Heart left ventricle (tissue), 16 donors: ENCODE measurements at regions of chr13 and their contacts with region 1.

Region 1: DNA sequence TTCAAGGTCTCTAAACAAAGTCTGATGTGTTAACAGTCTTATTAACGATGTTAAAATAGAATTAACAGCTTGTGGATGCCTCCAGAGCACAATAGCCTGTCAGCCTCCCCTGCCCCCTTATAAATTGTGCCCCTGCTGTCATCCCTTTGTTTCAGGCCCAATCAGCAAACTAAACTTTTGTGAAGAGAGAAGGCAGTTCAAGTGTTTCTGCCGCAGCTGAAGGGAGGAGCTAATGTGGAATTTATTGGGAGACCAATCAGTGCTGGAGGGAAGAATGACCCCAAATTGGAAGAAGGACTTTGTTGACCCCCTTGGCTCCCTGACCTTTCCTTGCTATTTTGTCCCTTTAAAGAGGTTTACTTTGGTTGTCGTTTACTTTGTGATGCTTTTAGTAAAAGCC is 160.5 kb downstream of the TM9SF2 start:
- DNase-seq: no peak
- ATAC-seq: no peak
- H3K4me3 ChIP-seq: no peak overlapping the region
- H3K27ac ChIP-seq: no peak overlapping the region
- H3K4me1 ChIP-seq: peaks cover 0 to 23% (median 8%) of the 10 kb centered on the region in 12 donors
- H3K27me3 ChIP-seq: peaks cover 0 to 10% (median 0%) of the 10 kb centered on the region in 9 donors
- CTCF ChIP-seq: no peak
- POLR2A ChIP-seq: no peak

Region 2: DNA sequence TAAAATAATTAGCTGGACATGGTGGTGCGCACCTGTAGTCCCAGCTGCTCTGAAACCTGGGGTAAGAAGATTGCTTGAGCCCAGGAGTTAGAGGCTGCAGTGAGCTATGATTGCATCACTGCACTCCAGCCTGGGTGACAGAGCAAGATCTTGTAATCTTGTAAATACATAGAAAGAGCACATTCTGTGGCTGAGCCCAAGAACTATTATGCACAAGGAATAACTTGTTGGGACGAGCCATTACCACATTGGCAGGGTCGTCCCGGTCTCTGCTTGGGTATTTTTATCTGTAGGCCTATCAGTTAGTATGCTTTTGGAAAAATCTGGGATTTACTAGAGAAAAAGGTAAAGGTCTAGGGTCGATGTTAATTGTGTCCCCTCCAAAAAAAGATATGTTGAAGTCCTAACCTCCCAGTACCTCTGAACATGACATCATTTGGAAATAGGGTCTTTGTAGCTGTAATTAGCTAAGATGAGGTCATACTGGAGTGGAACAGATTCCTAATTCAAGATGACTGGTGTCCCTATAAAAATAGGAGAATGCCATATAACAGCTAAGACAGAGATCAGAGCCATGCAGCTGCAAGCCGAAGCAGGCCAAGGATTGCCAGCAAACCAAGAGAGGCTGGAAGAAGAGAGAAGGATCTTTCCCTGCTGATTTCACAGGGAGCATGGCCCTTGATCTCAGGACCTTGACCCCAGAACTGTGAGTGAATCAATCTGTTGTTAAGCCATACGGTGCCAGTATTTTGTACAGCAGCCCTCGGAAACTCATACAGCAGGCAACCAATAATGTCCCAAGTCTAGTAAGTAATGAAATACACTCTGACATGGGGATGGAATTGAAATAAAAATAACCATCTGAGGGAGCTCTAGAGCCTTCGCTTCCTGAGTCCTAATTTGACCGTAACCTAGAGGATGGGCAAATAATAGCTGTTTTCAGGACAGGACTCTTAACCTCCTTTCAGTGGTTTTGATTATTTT is 83.6 kb before region 1 on chr13:
- intact Hi-C with region 1: no loop called
- DNase-seq: no peak
- ATAC-seq: peak in 3 of 4 donors; percentile 33 to 49 (median 36)
- H3K4me3 ChIP-seq: no peak overlapping the region
- H3K27ac ChIP-seq: no peak overlapping the region
- H3K4me1 ChIP-seq: peaks cover 0 to 6% (median 0%) of the 10 kb centered on the region in 12 donors
- H3K27me3 ChIP-seq: peaks cover 0 to 11% (median 0%) of the 10 kb centered on the region in 9 donors
- CTCF ChIP-seq: peak in 7 of 12 donors; percentile 12 to 54 (median 35)
- POLR2A ChIP-seq: no peak

Region 3: DNA sequence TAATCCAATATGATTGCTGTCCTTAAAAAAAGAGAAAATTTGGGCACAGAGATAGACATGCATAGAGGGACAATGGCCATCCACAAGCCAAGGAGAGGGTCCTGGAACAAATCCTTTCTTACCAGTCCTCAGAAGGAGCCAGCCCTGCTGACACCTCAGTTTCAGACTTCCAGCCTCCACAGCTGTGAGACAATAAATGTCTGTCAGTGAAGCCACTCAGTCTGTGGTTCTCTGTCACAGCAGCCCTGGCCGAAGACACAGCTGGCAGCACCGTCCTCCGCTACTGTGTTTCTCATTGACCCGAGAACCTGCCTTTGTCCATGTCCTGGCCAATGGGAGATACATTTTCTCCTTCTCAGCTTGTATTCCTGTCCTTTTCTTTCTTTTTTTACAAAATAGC is 47.3 kb after region 1 on chr13:
- intact Hi-C with region 1: no loop called
- DNase-seq: no peak
- ATAC-seq: no peak
- H3K4me3 ChIP-seq: no peak overlapping the region
- H3K27ac ChIP-seq: no peak overlapping the region
- H3K4me1 ChIP-seq: no peaks in the 10 kb centered on the region
- H3K27me3 ChIP-seq: no peaks in the 10 kb centered on the region
- CTCF ChIP-seq: no peak
- POLR2A ChIP-seq: no peak

Region 4: GRCh38 chr13:99916366-99917103 is 254.7 kb after region 1 on chr13:
- intact Hi-C with region 1: loop called in 9 of 10 experiments (anchors 2 to 10 kb)
- DNase-seq: no peak
- ATAC-seq: peak in 3 of 4 donors; percentile 67 to 76 (median 69)
- H3K4me3 ChIP-seq: no peak overlapping the region
- H3K27ac ChIP-seq: no peak overlapping the region
- H3K4me1 ChIP-seq: no peaks in the 10 kb centered on the region
- H3K27me3 ChIP-seq: peaks cover 0 to 46% (median 8%) of the 10 kb centered on the region in 9 donors
- CTCF ChIP-seq: peak; percentile 61 to 88 (median 78)
- POLR2A ChIP-seq: no peak